ENCODE measurements at regions of chr19 and their contacts with region 1.

Region 1: DNA sequence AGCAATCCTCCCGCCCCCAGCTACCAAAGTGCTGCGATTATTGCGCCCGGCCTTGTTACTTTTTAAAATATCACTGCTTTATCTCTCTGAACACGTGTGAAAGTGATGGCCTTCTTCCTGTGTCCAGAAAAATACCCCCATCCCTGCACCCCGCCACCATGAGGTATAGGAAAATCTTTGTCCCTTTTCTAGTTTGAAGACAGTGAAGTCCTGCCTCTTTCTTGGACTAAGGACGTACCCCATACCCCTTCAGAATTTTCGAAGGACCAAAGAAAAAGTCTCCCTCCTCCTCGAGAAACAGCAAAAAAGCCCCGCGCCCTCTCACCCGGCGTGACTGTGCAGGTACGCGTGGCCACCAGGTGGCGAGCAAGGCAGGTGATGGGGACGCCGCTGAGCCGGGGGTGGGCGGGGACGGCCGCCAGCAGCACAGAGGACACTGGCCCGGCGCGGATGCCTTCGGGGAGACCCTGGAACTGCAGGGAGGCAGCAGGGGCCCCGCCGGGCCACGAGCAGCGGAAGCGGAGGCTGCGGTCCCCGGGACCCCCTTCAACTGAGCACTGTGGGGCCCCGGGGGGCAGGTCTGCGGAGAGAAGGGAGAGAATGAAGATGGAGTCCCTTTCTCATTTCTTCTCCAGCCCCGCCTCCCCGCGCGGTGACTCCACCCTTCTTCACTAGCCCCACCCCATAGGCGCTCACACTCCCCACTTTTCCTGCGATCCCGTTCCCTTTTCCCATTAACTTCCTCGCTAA is 3.2 kb downstream of the VSIG10L start:
- DNase-seq: peak; percentile 74 to 91 (median 86)
- ATAC-seq: peak; percentile 85
- H3K4me3 ChIP-seq: peak overlapping the region; percentile 66 to 71
- H3K4me3 Mint-ChIP-seq: peak overlapping the region; percentile 82
- H3K27ac ChIP-seq: no peak overlapping the region
- H3K27ac Mint-ChIP-seq: no peak overlapping the region
- H3K4me1 ChIP-seq: peaks cover 16% of the 10 kb centered on the region
- H3K4me1 Mint-ChIP-seq: peaks cover 13% of the 10 kb centered on the region
- H3K27me3 ChIP-seq: no peaks in the 10 kb centered on the region
- H3K27me3 Mint-ChIP-seq: peaks cover 4% of the 10 kb centered on the region
- CTCF ChIP-seq: peak; percentile 97

Region 2: DNA sequence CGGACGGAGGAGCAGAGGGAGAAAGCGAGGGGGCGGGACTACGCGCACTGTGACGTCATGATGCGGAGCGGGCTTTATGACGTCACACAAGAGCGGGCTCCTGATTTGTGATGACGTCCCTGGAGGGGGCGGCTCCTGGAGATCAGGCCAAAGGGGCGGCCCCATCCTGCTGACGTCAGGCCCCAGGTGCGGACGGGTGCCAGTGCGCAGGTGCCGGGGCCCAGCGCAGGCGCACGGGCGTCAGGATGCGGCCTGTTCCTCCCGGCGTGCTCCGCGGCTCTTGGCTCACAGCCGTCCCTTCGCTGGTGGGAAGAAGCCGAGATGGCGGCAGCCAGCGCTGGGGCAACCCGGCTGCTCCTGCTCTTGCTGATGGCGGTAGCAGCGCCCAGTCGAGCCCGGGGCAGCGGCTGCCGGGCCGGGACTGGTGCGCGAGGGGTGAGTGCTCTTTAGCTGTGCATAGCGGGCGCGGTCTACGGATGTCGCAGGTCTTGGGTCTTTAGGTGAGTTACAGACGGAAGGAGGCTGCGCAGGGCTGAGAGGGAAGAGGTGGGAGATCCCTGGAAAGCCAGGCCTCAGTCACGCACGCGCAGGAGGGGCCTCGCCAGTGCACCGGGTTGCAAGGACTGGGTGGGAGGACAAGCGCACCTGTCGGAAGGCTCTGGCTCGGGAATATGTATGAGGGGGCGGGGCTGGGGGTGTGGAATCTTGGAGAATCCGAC is 862.4 kb before region 1 on chr19 and contains the starts of genes EMC10 and GARIN5A:
- CTCF ChIA-PET with region 1: no interaction called
- POLR2A ChIA-PET with region 1: no interaction called
- intact Hi-C with region 1: no loop called
- DNase-seq: peak; percentile 77 to 98 (median 91)
- ATAC-seq: peak; percentile 96
- H3K4me3 ChIP-seq: peak within 1 kb of the TSS; percentile 97 to 99
- H3K4me3 Mint-ChIP-seq: peak within 1 kb of the TSS; percentile 97
- H3K27ac ChIP-seq: peak within 1 kb of the TSS; percentile 91 to 94
- H3K27ac Mint-ChIP-seq: peak within 1 kb of the TSS; percentile 95
- H3K4me1 ChIP-seq: peaks cover 24% of the 10 kb centered on the region
- H3K4me1 Mint-ChIP-seq: peaks cover 22% of the 10 kb centered on the region
- H3K27me3 ChIP-seq: no peaks in the 10 kb centered on the region
- H3K27me3 Mint-ChIP-seq: no peaks in the 10 kb centered on the region
- CTCF ChIP-seq: no peak
- total RNA-seq, gene EMC10: 96.7 to 104 TPM
- total RNA-seq, gene GARIN5A: 0.33 TPM in 1 of 2 experiments, not detected in the other

Region 3: DNA sequence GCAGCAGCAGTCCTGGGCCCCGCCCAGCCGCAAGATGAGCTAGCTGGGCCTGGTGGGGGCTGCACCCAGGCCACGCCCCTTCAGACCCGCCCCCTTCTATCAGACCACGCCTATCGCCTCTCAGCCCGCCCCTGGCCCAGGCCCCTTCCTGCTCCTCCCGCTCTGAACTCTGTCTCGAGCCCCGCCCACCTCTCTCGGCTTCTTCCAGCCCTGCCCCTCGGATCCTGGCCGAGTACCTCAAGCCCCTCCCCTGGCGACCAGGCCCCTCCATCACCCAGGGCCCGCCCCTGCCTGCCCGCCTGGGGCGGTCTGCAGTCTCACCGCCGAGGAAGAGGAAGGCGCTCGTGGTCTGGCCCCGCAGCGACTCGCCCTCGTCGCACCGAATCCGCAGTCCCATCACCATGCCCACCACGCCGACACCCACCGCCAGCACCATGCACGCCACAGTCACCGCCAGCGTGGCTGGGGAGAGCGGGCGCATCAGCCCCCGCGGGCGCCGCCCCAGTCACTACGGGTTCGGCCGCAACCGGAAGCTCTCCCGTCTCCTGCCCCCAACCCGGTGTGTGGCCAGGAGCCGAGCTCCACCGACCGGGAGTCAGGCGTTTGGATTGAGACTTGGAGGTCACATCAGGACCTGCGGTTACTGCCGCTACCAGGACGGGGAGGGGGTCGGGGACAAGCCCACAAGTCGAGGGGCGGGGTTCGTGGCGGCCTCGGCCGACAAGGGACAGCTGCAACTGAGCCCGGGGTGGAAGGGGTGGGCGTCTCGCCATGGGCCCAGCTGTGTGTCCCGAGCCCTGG is 29.0 kb after region 1 on chr19:
- CTCF ChIA-PET with region 1: interaction called, 6 read pairs
- POLR2A ChIA-PET with region 1: interaction called, 3 read pairs
- intact Hi-C with region 1: loop called (anchors 1 kb)
- DNase-seq: peak; percentile 88 to 98 (median 95)
- ATAC-seq: peak; percentile 78
- H3K4me3 ChIP-seq: peak overlapping the region; percentile 74 to 77
- H3K4me3 Mint-ChIP-seq: peak overlapping the region; percentile 98
- H3K27ac ChIP-seq: peak overlapping the region; percentile 48 to 87
- H3K27ac Mint-ChIP-seq: peak overlapping the region; percentile 96
- H3K4me1 ChIP-seq: peaks cover 61% of the 10 kb centered on the region
- H3K4me1 Mint-ChIP-seq: peaks cover 72% of the 10 kb centered on the region
- H3K27me3 ChIP-seq: no peaks in the 10 kb centered on the region
- H3K27me3 Mint-ChIP-seq: no peaks in the 10 kb centered on the region
- CTCF ChIP-seq: no peak

Region 4: DNA sequence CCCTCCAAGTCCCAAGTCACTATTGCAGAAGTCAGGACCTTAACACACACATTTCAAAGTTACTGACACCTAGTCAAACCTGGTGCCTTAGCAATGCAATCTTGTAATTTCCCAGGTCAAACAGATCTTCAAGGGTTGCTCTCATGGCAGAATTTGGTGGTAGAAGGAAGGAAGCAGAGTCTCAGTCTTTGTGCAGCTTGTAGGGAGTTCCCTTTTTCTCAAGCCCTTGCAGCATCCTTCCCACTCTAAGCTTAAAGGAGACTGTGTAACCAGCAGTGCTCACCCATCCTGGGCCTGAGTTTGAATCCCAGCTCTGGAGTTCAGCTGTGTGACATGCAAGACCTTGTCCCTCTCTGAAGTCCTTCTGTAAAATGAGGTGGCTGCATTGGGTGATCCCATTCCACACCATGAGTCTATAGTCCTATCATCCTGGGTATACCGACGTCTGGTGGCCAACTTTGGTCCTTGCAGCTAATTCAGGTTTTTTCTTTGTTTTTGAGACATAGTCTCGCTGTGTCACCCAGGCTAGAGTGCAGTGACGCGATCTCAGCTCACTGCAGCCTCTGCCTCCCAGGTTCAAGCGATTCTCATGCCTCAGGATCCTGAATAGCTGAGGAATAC is 68.9 kb after region 1 on chr19:
- CTCF ChIA-PET with region 1: interaction called, 12 read pairs
- POLR2A ChIA-PET with region 1: no interaction called
- intact Hi-C with region 1: loop called (anchors 1 kb)
- DNase-seq: peak in 6 of 9 experiments; percentile 12 to 69 (median 50)
- ATAC-seq: peak; percentile 65
- H3K4me3 ChIP-seq: no peak overlapping the region
- H3K4me3 Mint-ChIP-seq: no peak overlapping the region
- H3K27ac ChIP-seq: no peak overlapping the region
- H3K27ac Mint-ChIP-seq: no peak overlapping the region
- H3K4me1 ChIP-seq: no peaks in the 10 kb centered on the region
- H3K4me1 Mint-ChIP-seq: no peaks in the 10 kb centered on the region
- H3K27me3 ChIP-seq: no peaks in the 10 kb centered on the region
- H3K27me3 Mint-ChIP-seq: peaks cover 8% of the 10 kb centered on the region
- CTCF ChIP-seq: peak; percentile 45

Region 5: GRCh38 chr19:51473009-51473707 is 134.4 kb after region 1 on chr19:
- CTCF ChIA-PET with region 1: interaction called, 4 read pairs
- POLR2A ChIA-PET with region 1: no interaction called
- intact Hi-C with region 1: loop called in 1 of 2 experiments (anchors 1 kb)
- DNase-seq: peak; percentile 49 to 90 (median 78)
- ATAC-seq: peak; percentile 44
- H3K4me3 ChIP-seq: no peak overlapping the region
- H3K4me3 Mint-ChIP-seq: no peak overlapping the region
- H3K27ac ChIP-seq: no peak overlapping the region
- H3K27ac Mint-ChIP-seq: no peak overlapping the region
- H3K4me1 ChIP-seq: no peaks in the 10 kb centered on the region
- H3K4me1 Mint-ChIP-seq: no peaks in the 10 kb centered on the region
- H3K27me3 ChIP-seq: peaks cover 0 to 5% of the 10 kb centered on the region in 2 experiments
- H3K27me3 Mint-ChIP-seq: peaks cover 27% of the 10 kb centered on the region
- CTCF ChIP-seq: peak; percentile 92

Region 6: DNA sequence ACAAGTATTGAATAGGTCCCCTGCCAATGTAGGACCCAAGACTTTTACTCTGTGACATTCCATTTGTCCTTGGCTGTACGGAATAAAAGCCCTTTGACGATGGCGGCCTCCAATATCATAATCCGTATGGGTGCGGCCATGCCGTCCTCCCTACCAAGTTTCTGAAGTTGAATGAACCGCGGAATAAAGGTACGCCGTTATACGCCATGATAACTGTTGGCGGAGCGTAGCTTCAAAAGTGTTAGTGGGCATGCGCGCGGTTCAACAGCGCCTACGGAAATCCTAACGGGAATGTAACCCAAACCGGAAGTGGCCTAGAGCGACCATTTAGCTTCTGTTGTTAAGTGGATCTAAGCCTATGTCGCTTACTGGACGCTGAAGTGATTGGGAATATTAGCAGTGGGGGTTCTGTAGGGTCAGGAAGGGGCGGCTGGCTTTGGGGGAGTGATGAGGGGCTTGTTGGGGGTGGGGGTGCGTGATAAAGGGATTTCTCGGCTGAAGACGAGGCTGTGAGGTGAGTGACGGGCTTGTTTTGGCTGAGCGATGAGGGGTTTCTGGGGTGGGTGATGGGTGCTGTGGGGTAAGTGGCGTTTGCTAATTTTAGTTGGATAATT is 232.3 kb after region 1 on chr19 and contains the start of gene ZNF175:
- CTCF ChIA-PET with region 1: no interaction called
- POLR2A ChIA-PET with region 1: no interaction called
- intact Hi-C with region 1: loop called in 1 of 2 experiments (anchors 1 kb)
- DNase-seq: peak; percentile 70 to 94 (median 87)
- ATAC-seq: peak; percentile 98
- H3K4me3 ChIP-seq: peak within 1 kb of the TSS; percentile 65 to 80
- H3K4me3 Mint-ChIP-seq: peak within 1 kb of the TSS; percentile 97
- H3K27ac ChIP-seq: no peak within 1 kb of the TSS
- H3K27ac Mint-ChIP-seq: peak within 1 kb of the TSS; percentile 85
- H3K4me1 ChIP-seq: peaks cover 19% of the 10 kb centered on the region
- H3K4me1 Mint-ChIP-seq: peaks cover 41% of the 10 kb centered on the region
- H3K27me3 ChIP-seq: no peaks in the 10 kb centered on the region
- H3K27me3 Mint-ChIP-seq: peaks cover 4% of the 10 kb centered on the region
- CTCF ChIP-seq: no peak
- total RNA-seq, gene ZNF175: 0.84 to 1.4 TPM

Region 7: GRCh38 chr19:51660975-51661600 is 322.4 kb after region 1 on chr19:
- CTCF ChIA-PET with region 1: interaction called, 6 read pairs
- POLR2A ChIA-PET with region 1: no interaction called
- intact Hi-C with region 1: loop called (anchors 1 kb)
- DNase-seq: peak in 5 of 9 experiments; percentile 41 to 54 (median 53)
- ATAC-seq: no peak
- H3K4me3 ChIP-seq: no peak overlapping the region
- H3K4me3 Mint-ChIP-seq: no peak overlapping the region
- H3K27ac ChIP-seq: no peak overlapping the region
- H3K27ac Mint-ChIP-seq: no peak overlapping the region
- H3K4me1 ChIP-seq: peaks cover 3% of the 10 kb centered on the region
- H3K4me1 Mint-ChIP-seq: peaks cover 5% of the 10 kb centered on the region
- H3K27me3 ChIP-seq: peaks cover 0 to 6% of the 10 kb centered on the region in 2 experiments
- H3K27me3 Mint-ChIP-seq: peaks cover 35% of the 10 kb centered on the region
- CTCF ChIP-seq: peak; percentile 17